ENCODE measurements at regions of chr17 and their contacts with region 1.

Region 1: GRCh38 chr17:63425482-63425881 is 20.6 kb downstream of the CYB561 start:
- DNase-seq: peak in 1 of 3 donors; percentile 73
- ATAC-seq: peak; percentile 88 to 96 (median 94)
- H3K4me3 ChIP-seq: no peak overlapping the region
- H3K27ac ChIP-seq: no peak overlapping the region
- H3K4me1 ChIP-seq: no peaks in the 10 kb centered on the region
- H3K27me3 ChIP-seq: no peaks in the 10 kb centered on the region
- CTCF ChIP-seq: peak; percentile 92 to 98 (median 96)
- POLR2A ChIP-seq: no peak

Region 2: DNA sequence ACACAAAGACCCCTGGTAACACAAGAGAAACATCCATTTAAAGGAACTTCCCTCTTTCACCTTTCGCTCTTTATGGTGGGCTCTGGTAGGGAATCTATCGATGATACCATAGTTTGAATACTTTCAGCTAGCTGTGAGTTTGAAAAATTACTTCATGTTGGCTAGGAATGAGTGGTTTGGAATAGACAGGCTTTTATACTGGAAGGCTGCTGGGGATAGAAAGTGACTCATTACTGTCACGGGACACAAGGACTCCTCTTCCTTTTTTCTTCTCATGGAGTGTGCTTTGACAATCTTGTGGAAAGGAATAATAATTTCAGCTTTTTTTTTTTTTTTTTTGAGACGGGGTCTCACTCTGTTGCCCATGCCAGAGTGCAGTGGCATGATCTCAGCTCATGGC is 56.2 kb before region 1 on chr17:
- intact Hi-C with region 1: no loop called
- DNase-seq: no peak
- ATAC-seq: no peak
- H3K4me3 ChIP-seq: no peak overlapping the region
- H3K27ac ChIP-seq: no peak overlapping the region
- H3K4me1 ChIP-seq: no peaks in the 10 kb centered on the region
- H3K27me3 ChIP-seq: no peaks in the 10 kb centered on the region
- CTCF ChIP-seq: no peak
- POLR2A ChIP-seq: no peak

Region 3: DNA sequence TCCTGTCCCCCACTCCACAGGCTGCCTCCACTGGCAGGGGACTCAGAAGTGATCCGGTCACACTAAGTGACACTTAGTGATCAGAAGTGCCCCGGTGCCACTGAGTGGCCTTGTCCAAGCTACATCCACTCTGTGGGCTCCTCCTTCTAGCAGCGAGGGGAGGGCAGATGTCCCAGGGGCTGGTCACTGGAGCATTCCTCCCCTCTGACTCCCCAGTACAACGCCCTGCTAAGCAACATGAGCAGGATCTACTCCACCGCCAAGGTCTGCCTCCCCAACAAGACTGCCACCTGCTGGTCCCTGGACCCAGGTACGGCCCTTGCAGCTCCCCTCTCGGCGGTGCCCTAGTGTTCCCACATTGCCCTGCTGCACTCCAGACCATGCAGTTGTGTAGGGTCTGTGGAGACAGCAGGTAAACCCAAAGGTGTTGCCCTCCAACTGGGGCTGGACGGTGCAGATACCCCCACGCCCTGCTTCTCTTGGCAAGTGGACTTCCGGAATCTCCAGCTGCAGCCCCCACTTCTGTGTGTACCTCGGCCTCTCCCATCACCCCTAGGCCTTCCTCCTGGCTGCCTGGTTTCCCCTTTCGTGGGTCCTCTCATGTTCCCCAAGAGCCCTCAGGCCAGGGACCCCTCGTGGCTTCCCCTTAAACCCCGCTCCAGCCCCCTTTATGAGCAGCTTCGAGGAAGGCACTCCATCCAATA is 53.5 kb after region 1 on chr17:
- intact Hi-C with region 1: loop called (anchors 2 to 5 kb)
- DNase-seq: peak; percentile 83 to 86 (median 83)
- ATAC-seq: peak; percentile 81 to 87 (median 84)
- H3K4me3 ChIP-seq: no peak overlapping the region
- H3K27ac ChIP-seq: no peak overlapping the region
- H3K4me1 ChIP-seq: peaks cover 0 to 10% (median 0%) of the 10 kb centered on the region in 4 donors
- H3K27me3 ChIP-seq: peaks cover 0 to 7% of the 10 kb centered on the region in 2 donors
- CTCF ChIP-seq: peak; percentile 72 to 83 (median 82)
- POLR2A ChIP-seq: no peak

Region 4: DNA sequence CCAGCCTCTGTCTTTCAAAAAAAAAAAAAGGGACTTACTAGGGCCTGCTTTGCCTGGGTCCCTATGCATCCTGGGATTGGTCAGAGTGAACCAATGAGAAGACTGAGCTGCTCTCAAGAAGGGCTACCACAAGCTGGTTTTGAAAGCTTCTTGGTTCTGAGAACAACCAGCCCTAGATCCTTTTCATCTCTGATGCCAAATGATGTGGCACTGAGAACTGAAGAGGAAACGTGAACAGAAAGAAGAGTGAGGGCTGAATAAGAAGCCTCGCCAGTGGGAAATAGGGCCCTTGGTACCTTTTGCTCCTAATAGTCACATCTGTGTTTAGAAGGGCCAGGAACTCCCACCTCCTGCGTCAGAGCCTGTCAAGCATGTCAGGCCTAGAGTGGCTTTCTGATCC is 185.9 kb after region 1 on chr17:
- intact Hi-C with region 1: loop called (anchors 5 kb)
- DNase-seq: no peak
- ATAC-seq: no peak
- H3K4me3 ChIP-seq: no peak overlapping the region
- H3K27ac ChIP-seq: peak overlapping the region in 1 of 3 donors; percentile 72
- H3K4me1 ChIP-seq: peaks cover 0 to 6% (median 0%) of the 10 kb centered on the region in 4 donors
- H3K27me3 ChIP-seq: no peaks in the 10 kb centered on the region
- CTCF ChIP-seq: no peak
- POLR2A ChIP-seq: no peak